Activated CD4-positive, alpha-beta T cell treated with anti-CD3 and anti-CD28 coated beads for 36 hours (primary cell): ENCODE measurements at regions of chr16 and their contacts with region 1.

Region 1: GRCh38 chr16:61195006-61195405 is 841.2 kb downstream of the CDH8 start:
- DNase-seq: no peak
- ATAC-seq: no peak
- H3K4me3 Mint-ChIP-seq: no peak overlapping the region
- H3K27ac Mint-ChIP-seq: no peak overlapping the region
- H3K4me1 Mint-ChIP-seq: no peaks in the 10 kb centered on the region
- H3K27me3 Mint-ChIP-seq: no peaks in the 10 kb centered on the region

Region 2: DNA sequence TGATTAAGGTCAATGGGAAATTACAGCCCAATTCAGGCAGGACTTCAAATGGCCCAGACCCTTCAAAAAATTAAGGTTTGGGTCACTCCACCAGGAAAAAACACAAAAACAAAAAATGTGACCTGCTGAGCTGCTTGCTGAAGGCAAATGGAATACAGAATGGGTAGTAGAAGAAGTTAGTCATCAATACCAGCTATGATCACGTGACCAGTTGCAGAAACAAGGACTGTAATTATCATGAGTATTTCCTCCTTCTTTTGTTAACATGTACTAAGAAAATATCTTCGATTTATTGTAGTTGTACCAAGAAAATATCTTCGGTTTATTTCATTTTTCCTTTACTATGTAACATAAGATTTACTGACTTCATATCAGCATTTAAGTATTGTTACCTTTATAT is 342.4 kb before region 1 on chr16:
- CTCF ChIA-PET with region 1: no interaction called
- POLR2A ChIA-PET with region 1: no interaction called
- intact Hi-C with region 1: no loop called
- DNase-seq: no peak
- ATAC-seq: no peak
- H3K4me3 Mint-ChIP-seq: no peak overlapping the region
- H3K27ac Mint-ChIP-seq: no peak overlapping the region
- H3K4me1 Mint-ChIP-seq: no peaks in the 10 kb centered on the region
- H3K27me3 Mint-ChIP-seq: no peaks in the 10 kb centered on the region

Region 3: GRCh38 chr16:61148930-61149329 is 46.1 kb before region 1 on chr16:
- CTCF ChIA-PET with region 1: no interaction called
- POLR2A ChIA-PET with region 1: no interaction called
- intact Hi-C with region 1: no loop called
- DNase-seq: no peak
- ATAC-seq: no peak
- H3K4me3 Mint-ChIP-seq: no peak overlapping the region
- H3K27ac Mint-ChIP-seq: no peak overlapping the region
- H3K4me1 Mint-ChIP-seq: no peaks in the 10 kb centered on the region
- H3K27me3 Mint-ChIP-seq: no peaks in the 10 kb centered on the region

Region 4: GRCh38 chr16:61165797-61166196 is 29.2 kb before region 1 on chr16:
- CTCF ChIA-PET with region 1: no interaction called
- POLR2A ChIA-PET with region 1: no interaction called
- intact Hi-C with region 1: loop called in 1 of 2 experiments (anchors 1 kb)
- DNase-seq: no peak
- ATAC-seq: no peak
- H3K4me3 Mint-ChIP-seq: no peak overlapping the region
- H3K27ac Mint-ChIP-seq: no peak overlapping the region
- H3K4me1 Mint-ChIP-seq: no peaks in the 10 kb centered on the region
- H3K27me3 Mint-ChIP-seq: no peaks in the 10 kb centered on the region